ENCODE measurements at regions of chr16 and their contacts with region 1.

Region 1: DNA sequence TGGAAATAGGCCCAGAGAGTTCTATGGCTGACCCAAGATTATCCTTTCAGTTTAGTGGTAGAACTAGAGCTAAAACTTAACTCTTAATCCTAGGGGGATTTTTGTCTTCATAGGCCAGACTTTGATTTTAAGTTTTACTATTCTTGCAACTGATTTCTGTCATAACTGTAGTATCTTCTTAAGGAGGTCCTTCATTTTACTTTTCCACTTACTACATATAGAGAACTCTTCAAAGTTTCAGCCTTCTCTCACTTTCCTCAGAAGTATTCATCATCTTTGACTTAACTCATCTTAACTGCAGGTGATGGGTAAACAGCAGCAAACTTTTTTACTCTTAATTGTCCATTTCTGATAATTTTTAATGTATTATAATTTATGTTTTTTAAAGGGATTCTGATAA is 23.4 kb downstream of the RBBP6 start:
- DNase-seq: no peak
- H3K4me3 Mint-ChIP-seq: no peak overlapping the region
- H3K27ac Mint-ChIP-seq: no peak overlapping the region
- H3K4me1 Mint-ChIP-seq: no peaks in the 10 kb centered on the region
- H3K27me3 Mint-ChIP-seq: no peaks in the 10 kb centered on the region

Region 2: GRCh38 chr16:24544640-24545039 is 18.2 kb before region 1 on chr16:
- intact Hi-C with region 1: loop called (anchors 2 kb)
- DNase-seq: no peak
- H3K4me3 Mint-ChIP-seq: no peak overlapping the region
- H3K27ac Mint-ChIP-seq: peak overlapping the region; percentile 8
- H3K4me1 Mint-ChIP-seq: peaks cover 62% of the 10 kb centered on the region
- H3K27me3 Mint-ChIP-seq: no peaks in the 10 kb centered on the region

Region 3: DNA sequence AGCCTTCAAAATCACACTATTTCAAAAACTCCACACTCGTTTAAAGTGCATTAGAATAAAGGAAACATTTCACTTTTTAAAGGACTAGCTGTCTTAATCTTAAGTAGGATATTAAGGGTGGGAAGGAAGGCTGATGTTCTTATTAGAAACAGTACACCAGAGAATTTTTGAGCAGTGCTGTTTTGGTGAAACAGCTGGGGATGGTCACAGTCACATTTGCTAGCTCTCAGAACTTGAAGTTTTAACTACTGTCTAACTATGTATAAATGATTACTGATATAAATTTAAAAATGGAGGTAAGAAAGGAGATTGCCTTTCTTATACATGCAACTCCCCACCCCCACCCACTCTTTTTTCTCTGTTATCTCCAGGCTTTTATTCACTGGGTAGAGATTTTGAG is 244.5 kb after region 1 on chr16:
- intact Hi-C with region 1: loop called (anchors 5 kb)
- DNase-seq: no peak
- H3K4me3 Mint-ChIP-seq: no peak overlapping the region
- H3K27ac Mint-ChIP-seq: no peak overlapping the region
- H3K4me1 Mint-ChIP-seq: no peaks in the 10 kb centered on the region
- H3K27me3 Mint-ChIP-seq: no peaks in the 10 kb centered on the region